CD4-positive, alpha-beta T cell (primary cell): ENCODE measurements at regions of chr7 and their contacts with region 1.

Region 1: DNA sequence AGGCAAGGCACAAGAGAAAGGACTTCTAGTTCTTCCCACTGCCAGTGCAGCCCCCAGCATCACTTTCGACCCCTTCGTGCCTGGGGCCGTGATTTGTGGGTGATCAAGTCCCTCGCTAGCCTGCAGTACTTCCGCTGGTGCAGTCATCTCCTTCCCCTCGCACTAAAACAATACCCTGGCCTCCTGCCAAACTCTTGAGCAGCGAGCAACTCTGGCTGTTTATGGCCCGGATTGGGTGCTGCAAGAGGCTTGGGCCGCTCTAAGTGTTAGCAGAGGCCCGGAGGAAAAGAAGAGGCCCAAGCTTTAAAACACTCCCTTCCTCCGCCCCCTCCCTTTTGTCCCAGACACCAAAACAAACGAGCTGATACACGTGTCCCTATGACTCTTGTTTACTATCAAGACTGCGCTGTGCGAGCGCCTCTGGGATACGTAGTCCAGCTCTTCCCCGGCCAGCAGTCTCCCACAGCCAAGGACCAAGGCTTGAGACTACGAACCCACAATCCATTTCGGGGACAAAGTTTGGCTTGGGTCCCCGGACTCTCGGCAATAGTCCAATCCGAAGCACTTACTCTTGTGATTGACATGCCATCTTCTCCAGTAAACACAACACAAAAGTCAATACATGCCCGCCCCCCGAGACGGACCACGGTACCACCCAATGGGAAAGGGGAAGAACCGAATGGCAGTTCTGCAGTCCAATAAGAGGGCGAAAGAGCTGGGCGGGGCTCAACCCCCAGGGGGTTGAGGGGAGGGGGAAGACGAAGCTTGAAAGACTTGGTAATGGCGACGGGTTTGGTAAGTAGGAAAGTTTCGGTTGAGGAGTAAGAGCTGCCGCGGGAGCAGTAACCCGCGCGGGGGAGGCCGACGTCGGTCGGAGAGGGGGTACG is at the start of gene HBP1:
- DNase-seq: peak; percentile 95 to 100 (median 96)
- ATAC-seq: peak; percentile 76
- H3K4me3 ChIP-seq: peak within 1 kb of the TSS; percentile 87
- H3K4me3 Mint-ChIP-seq: peak within 1 kb of the TSS; percentile 99
- H3K27ac ChIP-seq: peak within 1 kb of the TSS; percentile 98 to 99
- H3K27ac Mint-ChIP-seq: peak within 1 kb of the TSS; percentile 98
- H3K4me1 ChIP-seq: peaks cover 20% of the 10 kb centered on the region
- H3K4me1 Mint-ChIP-seq: peaks cover 51% of the 10 kb centered on the region
- H3K27me3 ChIP-seq: no peaks in the 10 kb centered on the region
- H3K27me3 Mint-ChIP-seq: no peaks in the 10 kb centered on the region
- CTCF ChIP-seq: no peak
- total RNA-seq, gene HBP1: 238 to 242 TPM

Region 2: GRCh38 chr7:106112117-106112971 is 1056.1 kb before region 1 on chr7 and contains the start of gene SYPL1:
- CTCF ChIA-PET with region 1: no interaction called
- POLR2A ChIA-PET with region 1: interaction called, 18 read pairs
- intact Hi-C with region 1: loop called in 1 of 2 experiments (anchors 5 kb)
- DNase-seq: peak; percentile 89 to 98 (median 94)
- ATAC-seq: peak; percentile 84
- H3K4me3 ChIP-seq: peak within 1 kb of the TSS; percentile 73
- H3K4me3 Mint-ChIP-seq: peak within 1 kb of the TSS; percentile 94
- H3K27ac ChIP-seq: peak within 1 kb of the TSS; percentile 81 to 82
- H3K27ac Mint-ChIP-seq: peak within 1 kb of the TSS; percentile 90
- H3K4me1 ChIP-seq: peaks cover 26% of the 10 kb centered on the region
- H3K4me1 Mint-ChIP-seq: peaks cover 78% of the 10 kb centered on the region
- H3K27me3 ChIP-seq: no peaks in the 10 kb centered on the region
- H3K27me3 Mint-ChIP-seq: no peaks in the 10 kb centered on the region
- CTCF ChIP-seq: no peak
- total RNA-seq, gene SYPL1: 51.2 to 53.1 TPM

Region 3: DNA sequence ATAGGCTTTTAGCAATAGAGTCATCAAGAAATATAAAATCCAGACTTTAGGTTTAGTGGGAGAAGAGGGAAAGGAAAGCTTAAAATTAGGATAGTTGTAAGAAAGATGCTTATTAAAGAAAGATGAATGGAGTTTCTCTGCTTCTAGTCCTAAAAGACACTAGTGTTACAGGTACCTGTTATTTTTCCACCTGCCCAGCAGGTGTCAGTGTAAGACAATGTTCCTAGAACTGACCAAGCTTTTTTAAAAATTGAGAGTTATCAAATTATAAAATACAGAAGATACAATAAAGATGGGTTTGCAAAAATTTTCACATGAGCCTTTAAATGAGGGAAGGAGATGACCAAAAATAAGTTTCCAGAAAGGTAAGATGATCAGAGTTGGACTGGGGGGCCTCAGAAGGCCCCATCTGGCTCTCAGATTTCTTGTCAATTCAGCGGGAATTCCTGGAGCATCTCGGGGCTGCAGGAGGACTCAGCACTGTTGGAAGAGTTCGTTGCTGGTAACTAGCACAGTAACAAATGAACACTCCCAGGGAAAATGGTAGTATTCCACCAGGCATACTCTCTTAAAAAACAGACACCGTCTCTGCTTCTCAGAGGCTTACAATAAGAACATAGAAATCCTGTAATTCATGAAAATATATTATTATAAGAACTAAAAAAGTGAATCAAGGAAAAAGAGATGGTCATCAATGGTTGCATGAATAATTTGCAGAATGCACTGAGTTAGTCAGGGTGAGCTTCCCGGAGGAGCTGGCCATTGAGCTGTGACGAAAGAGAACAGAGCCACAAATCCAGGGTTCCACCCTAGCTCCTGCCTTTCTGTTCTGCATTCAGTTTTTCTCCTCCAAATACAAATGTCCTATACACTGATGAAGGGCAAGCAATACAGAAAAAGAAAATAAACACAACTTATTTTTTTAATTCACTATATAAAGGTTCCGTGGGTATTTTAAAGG is 375.2 kb before region 1 on chr7:
- CTCF ChIA-PET with region 1: interaction called, 3 read pairs
- POLR2A ChIA-PET with region 1: interaction called, 10 read pairs
- intact Hi-C with region 1: no loop called
- DNase-seq: peak in 9 of 14 experiments; percentile 12 to 78 (median 22)
- ATAC-seq: peak; percentile 58
- H3K4me3 ChIP-seq: no peak overlapping the region
- H3K4me3 Mint-ChIP-seq: no peak overlapping the region
- H3K27ac ChIP-seq: no peak overlapping the region
- H3K27ac Mint-ChIP-seq: no peak overlapping the region
- H3K4me1 ChIP-seq: no peaks in the 10 kb centered on the region
- H3K4me1 Mint-ChIP-seq: peaks cover 3% of the 10 kb centered on the region
- H3K27me3 ChIP-seq: no peaks in the 10 kb centered on the region
- H3K27me3 Mint-ChIP-seq: no peaks in the 10 kb centered on the region
- CTCF ChIP-seq: peak; percentile 88

Region 4: DNA sequence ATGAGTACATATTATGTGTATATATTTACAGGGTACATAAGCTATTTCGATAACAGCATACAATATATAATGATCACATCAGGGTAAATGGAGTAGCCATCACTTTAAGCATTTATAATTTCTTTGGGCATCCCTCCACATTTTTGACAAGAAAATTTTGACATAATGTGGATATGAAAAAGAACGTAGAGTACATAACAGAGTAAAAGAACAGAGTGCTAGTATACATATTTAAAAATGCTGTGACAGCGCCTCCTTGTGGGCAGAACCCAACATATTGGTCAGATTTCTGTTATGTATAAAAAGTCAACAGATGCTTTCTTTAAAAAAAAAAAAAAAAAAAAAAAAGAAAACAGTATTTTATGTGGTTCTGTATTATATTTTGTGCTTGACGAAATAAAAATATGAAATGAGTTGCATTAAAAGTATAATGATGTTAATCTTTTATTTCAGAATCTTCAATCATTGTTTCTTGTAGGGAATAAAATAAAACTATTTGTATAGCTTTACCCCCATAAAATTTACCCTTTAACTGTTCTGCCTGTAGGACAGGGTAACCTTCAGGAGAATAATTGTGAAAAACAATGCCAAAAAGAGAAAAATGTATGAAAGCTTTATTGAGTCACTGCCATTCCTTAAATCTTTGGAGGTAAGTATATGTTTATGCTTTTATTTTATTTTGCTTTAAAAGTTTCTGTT is 18.0 kb before region 1 on chr7:
- CTCF ChIA-PET with region 1: interaction called, 35 read pairs
- POLR2A ChIA-PET with region 1: interaction called, 61 read pairs
- intact Hi-C with region 1: loop called in 1 of 2 experiments (anchors 1 kb)
- DNase-seq: peak; percentile 60 to 89 (median 76)
- ATAC-seq: peak; percentile 89
- H3K4me3 ChIP-seq: no peak overlapping the region
- H3K4me3 Mint-ChIP-seq: no peak overlapping the region
- H3K27ac ChIP-seq: no peak overlapping the region
- H3K27ac Mint-ChIP-seq: no peak overlapping the region
- H3K4me1 ChIP-seq: no peaks in the 10 kb centered on the region
- H3K4me1 Mint-ChIP-seq: peaks cover 6% of the 10 kb centered on the region
- H3K27me3 ChIP-seq: no peaks in the 10 kb centered on the region
- H3K27me3 Mint-ChIP-seq: no peaks in the 10 kb centered on the region
- CTCF ChIP-seq: peak; percentile 94

Region 5: GRCh38 chr7:107201795-107202450 is 33.4 kb after region 1 on chr7:
- CTCF ChIA-PET with region 1: interaction called, 3 read pairs
- POLR2A ChIA-PET with region 1: interaction called, 50 read pairs
- intact Hi-C with region 1: no loop called
- DNase-seq: peak in 7 of 14 experiments; percentile 13 to 52 (median 25)
- ATAC-seq: peak; percentile 72
- H3K4me3 ChIP-seq: no peak overlapping the region
- H3K4me3 Mint-ChIP-seq: no peak overlapping the region
- H3K27ac ChIP-seq: no peak overlapping the region
- H3K27ac Mint-ChIP-seq: peak overlapping the region; percentile 19
- H3K4me1 ChIP-seq: no peaks in the 10 kb centered on the region
- H3K4me1 Mint-ChIP-seq: no peaks in the 10 kb centered on the region
- H3K27me3 ChIP-seq: no peaks in the 10 kb centered on the region
- H3K27me3 Mint-ChIP-seq: no peaks in the 10 kb centered on the region
- CTCF ChIP-seq: peak; percentile 23

Region 6: DNA sequence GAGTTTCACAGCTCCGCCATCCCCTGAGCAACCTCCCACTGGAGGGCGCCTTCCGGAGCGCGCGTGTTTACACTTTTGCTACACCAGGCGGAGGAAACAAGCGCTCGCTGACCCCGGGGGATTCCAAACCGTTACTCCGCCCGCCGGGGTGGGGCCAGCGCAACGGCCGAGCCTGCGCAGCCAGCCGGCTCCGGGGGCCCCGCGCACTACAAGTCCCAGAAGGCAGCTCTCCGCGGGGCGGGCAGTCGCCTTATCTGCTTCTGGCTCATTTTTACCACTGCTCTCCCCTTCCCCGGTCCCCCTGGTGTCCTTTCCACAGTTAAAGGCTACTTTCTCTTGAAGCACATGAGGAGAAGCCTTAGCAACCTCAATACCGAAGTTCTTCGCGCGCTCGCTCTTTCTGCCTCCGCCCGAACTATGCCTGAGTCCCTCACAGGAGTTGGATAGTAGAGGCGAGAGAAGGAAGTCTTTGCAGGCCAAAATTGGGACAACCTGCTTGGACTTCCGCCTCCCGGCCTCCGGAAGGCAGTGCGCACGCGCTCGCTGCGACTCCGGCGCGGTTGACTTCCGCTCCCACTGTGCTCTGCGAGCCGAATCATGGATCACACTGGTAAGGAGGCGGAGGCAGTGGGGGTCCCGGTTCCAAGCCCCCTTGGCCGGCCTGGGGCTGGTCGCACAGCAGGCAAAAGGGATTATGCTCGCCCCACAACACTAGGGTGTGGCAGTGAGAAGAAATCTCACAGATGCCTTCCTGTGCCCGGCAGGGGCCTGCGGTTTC is 575.3 kb after region 1 on chr7 and contains the start of gene CBLL1:
- CTCF ChIA-PET with region 1: interaction called, 10 read pairs
- POLR2A ChIA-PET with region 1: interaction called, 130 read pairs
- intact Hi-C with region 1: loop called (anchors 5 kb)
- DNase-seq: peak; percentile 94 to 98 (median 97)
- ATAC-seq: peak; percentile 90
- H3K4me3 ChIP-seq: peak within 1 kb of the TSS; percentile 87
- H3K4me3 Mint-ChIP-seq: peak within 1 kb of the TSS; percentile 93
- H3K27ac ChIP-seq: peak within 1 kb of the TSS; percentile 99
- H3K27ac Mint-ChIP-seq: peak within 1 kb of the TSS; percentile 99
- H3K4me1 ChIP-seq: peaks cover 15% of the 10 kb centered on the region
- H3K4me1 Mint-ChIP-seq: peaks cover 55% of the 10 kb centered on the region
- H3K27me3 ChIP-seq: no peaks in the 10 kb centered on the region
- H3K27me3 Mint-ChIP-seq: no peaks in the 10 kb centered on the region
- CTCF ChIP-seq: peak; percentile 68
- total RNA-seq, gene CBLL1: 77.8 to 80.2 TPM

Region 7: GRCh38 chr7:107966711-107967110 is 798.2 kb after region 1 on chr7:
- CTCF ChIA-PET with region 1: no interaction called
- POLR2A ChIA-PET with region 1: no interaction called
- intact Hi-C with region 1: no loop called
- DNase-seq: no peak
- ATAC-seq: no peak
- H3K4me3 ChIP-seq: no peak overlapping the region
- H3K4me3 Mint-ChIP-seq: no peak overlapping the region
- H3K27ac ChIP-seq: no peak overlapping the region
- H3K27ac Mint-ChIP-seq: no peak overlapping the region
- H3K4me1 ChIP-seq: no peaks in the 10 kb centered on the region
- H3K4me1 Mint-ChIP-seq: no peaks in the 10 kb centered on the region
- H3K27me3 ChIP-seq: no peaks in the 10 kb centered on the region
- H3K27me3 Mint-ChIP-seq: no peaks in the 10 kb centered on the region
- CTCF ChIP-seq: no peak

Region 8: GRCh38 chr7:108004220-108005142 is 836.0 kb after region 1 on chr7:
- CTCF ChIA-PET with region 1: no interaction called
- POLR2A ChIA-PET with region 1: no interaction called
- intact Hi-C with region 1: no loop called
- DNase-seq: no peak
- ATAC-seq: no peak
- H3K4me3 ChIP-seq: no peak overlapping the region
- H3K4me3 Mint-ChIP-seq: peak overlapping the region; percentile 77
- H3K27ac ChIP-seq: no peak overlapping the region
- H3K27ac Mint-ChIP-seq: no peak overlapping the region
- H3K4me1 ChIP-seq: peaks cover 28% of the 10 kb centered on the region
- H3K4me1 Mint-ChIP-seq: peaks cover 12% of the 10 kb centered on the region
- H3K27me3 ChIP-seq: peaks cover 45 to 54% of the 10 kb centered on the region in 2 experiments
- H3K27me3 Mint-ChIP-seq: peaks cover 66% of the 10 kb centered on the region
- CTCF ChIP-seq: no peak

Region 9: DNA sequence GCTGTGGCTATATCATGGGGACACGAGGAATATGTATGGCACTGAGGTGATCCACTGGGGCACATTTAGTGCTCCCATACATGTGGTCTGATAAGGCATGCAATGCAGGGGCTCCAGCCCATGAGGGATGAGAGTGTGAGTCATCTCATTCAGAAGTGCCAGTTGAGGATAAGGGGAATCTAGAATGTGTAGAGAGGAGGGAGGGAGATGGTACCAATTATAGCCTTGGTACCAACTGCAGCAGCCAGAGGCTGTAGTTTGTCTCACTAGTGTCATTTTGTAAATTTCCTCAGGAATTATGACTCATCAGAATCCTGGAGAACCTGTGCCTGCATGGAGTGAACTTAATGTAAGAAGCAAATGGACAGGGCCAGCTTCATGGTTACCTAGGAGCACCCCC is 915.5 kb after region 1 on chr7:
- CTCF ChIA-PET with region 1: no interaction called
- POLR2A ChIA-PET with region 1: no interaction called
- intact Hi-C with region 1: no loop called
- DNase-seq: no peak
- ATAC-seq: no peak
- H3K4me3 ChIP-seq: no peak overlapping the region
- H3K4me3 Mint-ChIP-seq: no peak overlapping the region
- H3K27ac ChIP-seq: no peak overlapping the region
- H3K27ac Mint-ChIP-seq: no peak overlapping the region
- H3K4me1 ChIP-seq: no peaks in the 10 kb centered on the region
- H3K4me1 Mint-ChIP-seq: no peaks in the 10 kb centered on the region
- H3K27me3 ChIP-seq: no peaks in the 10 kb centered on the region
- H3K27me3 Mint-ChIP-seq: no peaks in the 10 kb centered on the region
- CTCF ChIP-seq: no peak

Region 10: GRCh38 chr7:108569381-108570145 is 1401.1 kb after region 1 on chr7 and contains the starts of genes DNAJB9 and THAP5:
- CTCF ChIA-PET with region 1: no interaction called
- POLR2A ChIA-PET with region 1: interaction called, 24 read pairs
- intact Hi-C with region 1: no loop called
- DNase-seq: peak; percentile 97 to 100 (median 99)
- ATAC-seq: peak; percentile 82
- H3K4me3 ChIP-seq: peak within 1 kb of the TSS; percentile 78
- H3K4me3 Mint-ChIP-seq: peak within 1 kb of the TSS; percentile 93
- H3K27ac ChIP-seq: peak within 1 kb of the TSS; percentile 98 to 99
- H3K27ac Mint-ChIP-seq: peak within 1 kb of the TSS; percentile 99
- H3K4me1 ChIP-seq: peaks cover 16% of the 10 kb centered on the region
- H3K4me1 Mint-ChIP-seq: peaks cover 81% of the 10 kb centered on the region
- H3K27me3 ChIP-seq: no peaks in the 10 kb centered on the region
- H3K27me3 Mint-ChIP-seq: no peaks in the 10 kb centered on the region
- CTCF ChIP-seq: no peak
- total RNA-seq, gene DNAJB9: 66.5 to 72.1 TPM
- total RNA-seq, gene THAP5: 11.7 to 12.6 TPM